ENCODE measurements at regions of chr16 and their contacts with region 1.

Region 1: DNA sequence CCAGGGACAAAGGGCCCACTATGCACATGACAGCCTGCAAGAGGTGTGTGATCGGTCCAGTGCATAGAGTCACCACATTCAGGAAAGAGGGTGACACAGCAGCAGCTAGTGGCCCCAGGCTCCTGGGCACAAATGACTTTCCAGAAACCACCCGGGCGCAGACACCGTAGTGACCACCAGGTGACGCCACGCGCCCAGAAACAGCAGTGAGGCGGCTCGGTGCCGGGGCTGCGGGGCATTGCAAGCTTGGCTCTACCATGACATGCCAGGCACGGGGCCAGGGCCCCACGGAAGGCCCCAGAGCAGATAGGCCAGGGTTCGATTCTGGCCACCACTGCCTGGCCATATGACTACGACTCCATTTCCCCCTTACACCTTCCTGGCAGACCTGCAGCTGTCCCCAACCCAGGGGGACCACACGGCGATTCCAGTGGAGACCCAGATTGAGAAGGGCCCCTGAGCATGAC is 6.7 kb downstream of the RHBDF1 start:
- DNase-seq: peak; percentile 85

Region 2: GRCh38 chr16:77807-78443 is 12.2 kb after region 1 on chr16 and contains the start of gene MPG:
- CTCF ChIA-PET with region 1: interaction called, 7 read pairs
- POLR2A ChIA-PET with region 1: interaction called, 13 read pairs
- DNase-seq: peak; percentile 87

Region 3: DNA sequence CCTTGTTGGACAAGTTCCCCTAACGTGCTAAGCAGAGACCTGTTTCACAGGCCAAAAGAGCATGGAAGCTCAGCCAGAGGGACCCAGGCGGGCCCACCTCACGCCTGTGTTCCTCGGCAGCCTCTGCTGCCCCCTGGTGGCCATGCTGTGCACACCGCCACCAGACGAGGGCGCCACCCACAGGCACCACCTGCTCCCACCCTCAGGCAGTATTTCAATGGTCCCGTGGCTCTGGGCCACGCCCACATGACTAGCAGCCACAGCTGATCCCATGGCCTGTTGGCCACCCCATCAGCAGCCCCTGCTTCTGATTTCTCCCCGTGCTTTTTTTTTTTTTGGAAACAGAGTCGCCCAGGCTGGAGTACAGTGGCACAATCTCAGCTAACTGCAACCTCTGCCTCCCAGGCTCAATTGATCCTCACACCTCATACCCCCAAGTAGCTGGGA is 31.3 kb after region 1 on chr16:
- CTCF ChIA-PET with region 1: interaction called, 130 read pairs
- POLR2A ChIA-PET with region 1: interaction called, 5 read pairs
- DNase-seq: peak; percentile 96